ENCODE measurements at regions of chr17 and their contacts with region 1.

Region 1: GRCh38 chr17:27206447-27206846 is 87.5 kb upstream of the WSB1 start:
- DNase-seq: peak; percentile 23
- H3K4me3 Mint-ChIP-seq: no peak overlapping the region
- H3K27ac Mint-ChIP-seq: no peak overlapping the region
- H3K4me1 Mint-ChIP-seq: peaks cover 3% of the 10 kb centered on the region
- H3K27me3 Mint-ChIP-seq: peaks cover 1% of the 10 kb centered on the region

Region 2: DNA sequence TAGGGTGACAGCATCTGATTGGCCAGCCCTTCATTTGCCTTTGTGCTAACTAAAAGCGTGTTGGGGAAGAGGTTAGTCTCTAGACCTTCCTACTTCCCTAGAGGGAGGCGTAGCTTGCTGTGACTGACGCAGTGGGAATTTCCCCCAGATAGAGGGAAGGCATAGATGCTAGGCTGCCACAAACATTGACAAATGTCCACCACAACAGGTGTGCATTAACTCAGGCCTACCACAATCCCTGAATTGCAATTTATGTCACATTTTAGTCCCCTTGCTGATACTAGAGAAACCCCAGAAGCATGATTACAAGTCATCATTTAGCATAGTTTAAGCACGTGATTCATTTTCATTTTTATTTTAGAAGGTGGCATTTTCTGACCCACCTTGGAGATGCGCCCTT is 11.2 kb after region 1 on chr17:
- CTCF ChIA-PET with region 1: interaction called, 11 read pairs
- POLR2A ChIA-PET with region 1: interaction called, 3 read pairs
- intact Hi-C with region 1: no loop called
- DNase-seq: no peak
- H3K4me3 Mint-ChIP-seq: no peak overlapping the region
- H3K27ac Mint-ChIP-seq: peak overlapping the region; percentile 42
- H3K4me1 Mint-ChIP-seq: peaks cover 14% of the 10 kb centered on the region
- H3K27me3 Mint-ChIP-seq: no peaks in the 10 kb centered on the region